OCI-LY7 (cell line): ENCODE measurements at regions of chr14 and their contacts with region 1.

Region 1: DNA sequence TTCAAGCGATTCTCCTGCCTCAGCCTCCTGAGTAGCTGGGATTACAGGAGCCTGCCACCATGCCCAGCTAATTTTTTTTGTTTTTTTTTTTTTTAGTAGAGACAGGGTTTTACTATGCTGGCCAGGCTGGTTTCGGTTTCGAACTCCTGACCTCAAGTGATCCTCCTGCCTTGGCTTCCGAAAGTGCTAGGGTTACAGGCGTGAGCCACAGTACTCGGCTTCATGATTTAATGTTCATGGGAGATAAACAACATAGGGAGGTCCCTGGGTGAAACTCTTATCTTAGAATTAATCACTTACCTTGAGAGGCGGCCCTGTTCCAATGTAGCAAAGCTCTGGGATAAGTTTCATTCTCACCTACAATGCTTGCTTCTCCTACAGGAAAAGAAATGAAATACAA is 48.3 kb downstream of the SEL1L start:
- DNase-seq: no peak
- H3K4me3 ChIP-seq: no peak overlapping the region
- H3K27ac ChIP-seq: no peak overlapping the region
- H3K4me1 ChIP-seq: no peaks in the 10 kb centered on the region
- CTCF ChIP-seq: no peak

Region 2: GRCh38 chr14:81137316-81137715 is 348.1 kb before region 1 on chr14:
- CTCF ChIA-PET with region 1: no interaction called
- POLR2A ChIA-PET with region 1: no interaction called
- intact Hi-C with region 1: no loop called
- DNase-seq: no peak
- H3K4me3 ChIP-seq: no peak overlapping the region
- H3K27ac ChIP-seq: no peak overlapping the region
- H3K4me1 ChIP-seq: no peaks in the 10 kb centered on the region
- CTCF ChIP-seq: no peak

Region 3: DNA sequence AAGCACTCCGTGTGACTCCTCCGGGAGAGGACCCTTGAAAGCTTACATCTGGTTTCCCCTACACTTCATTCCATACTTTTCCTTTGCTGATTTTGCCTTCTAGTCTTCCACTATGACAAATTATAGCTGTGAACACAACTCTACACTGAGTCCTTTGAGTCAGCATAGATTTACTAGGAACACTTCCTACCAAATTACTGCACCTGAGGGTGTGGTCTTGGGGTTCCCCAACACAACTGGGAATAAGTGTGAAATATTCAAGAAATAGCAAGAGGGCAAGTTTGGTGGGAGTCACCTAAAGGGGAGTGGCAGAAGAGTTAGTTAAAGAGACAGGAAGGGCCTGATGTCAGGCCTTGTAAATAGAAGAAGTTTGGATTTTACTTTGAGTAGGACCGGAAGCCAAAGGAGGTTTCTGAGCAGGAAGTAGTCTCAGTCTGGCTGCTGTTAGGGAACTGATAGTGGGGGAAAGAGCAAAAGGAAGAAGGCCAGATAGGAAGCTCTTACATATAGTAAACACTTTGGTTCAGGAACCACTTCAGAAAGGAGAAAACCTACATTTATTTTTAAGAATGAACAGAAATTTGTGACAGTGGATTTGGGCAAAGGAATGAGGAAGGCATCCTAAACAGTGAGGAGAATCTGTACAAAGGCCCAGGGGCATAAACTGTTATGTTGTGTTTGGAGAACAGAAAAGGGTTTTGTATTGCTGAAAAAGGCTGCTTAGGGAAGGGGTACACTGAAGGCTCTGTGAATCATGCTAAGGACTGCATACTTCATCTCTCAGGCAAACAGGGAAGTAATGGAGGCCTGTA is 34.0 kb after region 1 on chr14:
- CTCF ChIA-PET with region 1: no interaction called
- POLR2A ChIA-PET with region 1: interaction called, 7 read pairs
- intact Hi-C with region 1: loop called (anchors 5 kb)
- DNase-seq: no peak
- H3K4me3 ChIP-seq: no peak overlapping the region
- H3K27ac ChIP-seq: no peak overlapping the region
- H3K4me1 ChIP-seq: peaks cover 5% of the 10 kb centered on the region
- CTCF ChIP-seq: no peak

Region 4: DNA sequence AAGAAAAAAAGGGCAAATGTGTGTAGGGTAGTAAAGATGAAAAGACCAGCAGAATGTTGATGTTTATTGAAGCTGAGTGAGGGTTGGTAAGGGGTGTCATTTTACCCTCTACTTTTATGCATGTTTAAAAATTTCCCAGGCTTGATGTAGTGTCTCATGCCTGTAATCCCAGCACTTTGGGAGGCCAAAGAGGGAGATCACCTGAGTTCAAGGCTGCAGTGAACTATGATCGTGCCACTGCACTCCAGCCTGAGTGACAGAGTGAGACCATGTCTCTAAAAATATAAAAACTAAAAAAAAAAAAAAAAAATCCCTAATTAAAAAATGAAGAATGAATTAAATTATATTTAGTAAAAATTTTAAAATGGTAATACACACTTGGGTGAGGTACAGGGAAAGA is 39.8 kb after region 1 on chr14:
- CTCF ChIA-PET with region 1: interaction called, 3 read pairs
- POLR2A ChIA-PET with region 1: interaction called, 12 read pairs
- intact Hi-C with region 1: loop called (anchors 5 kb)
- DNase-seq: no peak
- H3K4me3 ChIP-seq: no peak overlapping the region
- H3K27ac ChIP-seq: no peak overlapping the region
- H3K4me1 ChIP-seq: peaks cover 21% of the 10 kb centered on the region
- CTCF ChIP-seq: no peak